ENCODE measurements at regions of chr14 and their contacts with region 1.

Region 1: DNA sequence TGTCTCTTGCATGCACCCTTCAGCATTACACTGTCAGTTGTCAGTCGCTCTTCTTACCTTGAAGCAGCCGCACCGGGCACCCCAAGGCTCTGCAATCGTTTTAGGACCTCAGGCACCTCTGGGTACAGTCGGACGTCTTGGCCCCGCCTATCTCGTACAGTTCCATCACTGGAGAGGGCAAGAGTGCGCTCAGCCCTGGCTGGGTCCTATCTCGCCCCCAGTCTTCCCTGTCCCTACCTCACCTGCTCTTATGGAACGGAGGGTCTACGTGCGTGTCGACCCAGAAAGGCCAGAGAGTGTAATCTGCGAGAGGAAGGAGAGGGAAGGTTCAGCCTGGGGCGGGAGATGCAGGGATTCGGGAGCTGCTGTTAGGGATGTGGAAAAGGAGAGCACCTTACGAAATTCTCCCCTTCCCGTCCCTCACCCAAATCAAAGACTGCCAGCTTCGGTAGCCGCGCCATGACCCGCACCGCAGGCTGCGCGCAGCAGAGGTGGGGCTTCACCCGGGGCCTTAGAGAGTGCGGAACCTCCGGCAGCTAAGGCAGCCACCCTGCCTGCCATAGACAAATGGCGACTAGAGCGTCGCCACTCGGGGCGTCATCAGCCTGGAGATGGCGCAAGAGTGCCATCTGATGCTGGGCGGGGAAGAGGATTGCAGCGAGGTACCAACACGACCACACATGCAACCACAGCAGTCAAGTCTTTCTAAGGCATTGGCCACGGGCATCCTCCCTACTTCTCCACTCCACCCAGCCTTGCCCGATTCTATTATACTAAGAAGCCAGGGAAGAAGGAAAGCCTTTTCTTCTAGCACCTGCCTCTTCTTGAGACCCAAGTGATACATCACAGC is at the start of gene MDP1:
- DNase-seq: peak; percentile 92
- H3K4me3 Mint-ChIP-seq: peak within 1 kb of the TSS; percentile 84
- H3K27ac Mint-ChIP-seq: peak within 1 kb of the TSS; percentile 94
- H3K4me1 Mint-ChIP-seq: peaks cover 41% of the 10 kb centered on the region
- H3K27me3 Mint-ChIP-seq: no peaks in the 10 kb centered on the region
- total RNA-seq, gene MDP1: 14.2 to 15.8 TPM

Region 2: GRCh38 chr14:24135834-24136542 is 79.7 kb before region 1 on chr14 and contains the start of gene PSME1:
- CTCF ChIA-PET with region 1: interaction called, 6 read pairs
- POLR2A ChIA-PET with region 1: interaction called, 6 read pairs
- intact Hi-C with region 1: loop called (anchors 1 kb)
- DNase-seq: peak; percentile 97
- H3K4me3 Mint-ChIP-seq: peak within 1 kb of the TSS; percentile 95
- H3K27ac Mint-ChIP-seq: peak within 1 kb of the TSS; percentile 96
- H3K4me1 Mint-ChIP-seq: peaks cover 54% of the 10 kb centered on the region
- H3K27me3 Mint-ChIP-seq: no peaks in the 10 kb centered on the region
- total RNA-seq, gene PSME1: 403 to 427 TPM

Region 3: GRCh38 chr14:24146978-24147760 is 68.6 kb before region 1 on chr14 and contains the start of gene RNF31:
- CTCF ChIA-PET with region 1: no interaction called
- POLR2A ChIA-PET with region 1: interaction called, 3 read pairs
- intact Hi-C with region 1: loop called (anchors 1 kb)
- DNase-seq: peak; percentile 99
- H3K4me3 Mint-ChIP-seq: peak within 1 kb of the TSS; percentile 100
- H3K27ac Mint-ChIP-seq: peak within 1 kb of the TSS; percentile 99
- H3K4me1 Mint-ChIP-seq: peaks cover 56% of the 10 kb centered on the region
- H3K27me3 Mint-ChIP-seq: no peaks in the 10 kb centered on the region
- total RNA-seq, gene RNF31: 75.5 to 80.4 TPM

Region 4: DNA sequence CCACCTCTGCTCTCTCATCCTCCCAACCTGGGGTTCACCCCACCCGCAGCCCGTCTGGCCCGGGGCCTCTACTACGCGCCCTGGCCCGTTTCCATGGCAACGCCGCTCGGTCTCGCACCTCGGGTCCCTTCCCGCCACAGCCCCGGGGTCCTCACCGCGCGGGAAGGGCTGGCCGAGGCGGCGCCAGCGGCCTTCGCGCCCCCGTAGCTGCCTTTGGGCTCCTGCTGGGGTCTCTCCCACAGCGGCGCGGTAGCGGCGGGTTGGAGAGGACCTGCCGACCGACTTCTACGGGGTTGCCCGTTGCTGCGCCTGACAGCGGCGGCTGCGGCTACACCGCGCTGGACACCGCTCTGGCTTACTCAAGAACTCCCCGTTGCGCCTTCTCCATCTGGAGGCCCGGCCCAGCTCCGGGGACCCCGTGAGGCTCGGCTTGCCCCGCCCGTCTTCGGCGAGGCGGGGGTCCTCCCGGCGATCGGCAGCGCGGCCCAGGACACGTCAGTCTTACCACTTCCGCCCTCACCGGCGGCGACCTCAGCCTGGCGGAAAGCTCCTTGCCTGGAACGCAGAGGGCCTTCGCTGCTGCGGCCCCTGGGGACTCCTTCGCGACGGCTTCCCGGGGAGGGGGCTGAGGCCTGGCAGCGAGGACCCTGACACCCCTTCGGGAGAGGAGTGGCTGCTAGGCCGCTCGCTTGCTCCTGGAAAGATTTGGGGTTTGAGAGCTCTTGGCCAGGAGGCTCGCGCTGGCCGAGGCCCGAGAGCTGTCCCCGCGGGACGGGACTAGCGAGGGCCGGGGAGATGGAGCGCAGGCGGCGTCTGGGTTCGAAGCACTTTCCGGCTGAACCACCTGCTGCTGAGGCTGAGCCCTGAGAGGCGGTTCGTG is 20.3 kb before region 1 on chr14 and contains the start of gene TM9SF1:
- CTCF ChIA-PET with region 1: interaction called, 9 read pairs
- POLR2A ChIA-PET with region 1: interaction called, 20 read pairs
- intact Hi-C with region 1: loop called (anchors 1 kb)
- DNase-seq: peak; percentile 91
- H3K4me3 Mint-ChIP-seq: peak within 1 kb of the TSS; percentile 96
- H3K27ac Mint-ChIP-seq: peak within 1 kb of the TSS; percentile 95
- H3K4me1 Mint-ChIP-seq: peaks cover 55% of the 10 kb centered on the region
- H3K27me3 Mint-ChIP-seq: no peaks in the 10 kb centered on the region
- total RNA-seq, gene TM9SF1: 23.7 to 26.7 TPM

Region 5: DNA sequence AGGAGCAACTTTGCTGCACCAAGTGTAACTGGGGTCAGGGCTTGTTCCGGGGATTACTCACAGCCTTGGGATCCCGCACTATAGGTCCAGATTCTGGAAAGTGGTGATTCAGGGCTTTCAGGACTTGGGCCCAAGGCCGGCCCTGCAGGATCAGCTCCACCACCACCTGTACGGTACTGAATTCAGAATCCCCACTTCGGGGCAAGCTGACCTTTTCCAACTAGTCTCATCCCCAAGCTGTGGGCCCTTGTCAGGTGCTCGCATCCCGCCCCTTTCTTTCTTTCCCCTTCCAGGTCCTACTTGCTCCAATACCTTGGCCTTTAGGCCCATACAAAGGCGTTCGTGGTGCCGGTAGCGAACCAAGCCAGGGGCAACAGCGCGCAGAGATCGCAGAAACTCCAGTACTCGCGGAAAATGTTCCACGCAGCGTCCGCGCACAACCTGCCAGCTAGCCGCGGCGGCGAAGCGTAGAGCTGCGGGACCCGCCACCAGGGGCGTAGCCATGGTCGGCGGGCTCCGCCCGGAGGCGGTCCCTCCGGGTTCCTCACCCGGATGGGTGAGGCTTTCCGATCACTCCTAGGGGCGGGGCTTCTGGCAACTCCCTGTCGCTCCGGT is 26.2 kb after region 1 on chr14:
- CTCF ChIA-PET with region 1: interaction called, 39 read pairs
- POLR2A ChIA-PET with region 1: interaction called, 12 read pairs
- intact Hi-C with region 1: loop called (anchors 1 kb)
- DNase-seq: peak; percentile 94
- H3K4me3 Mint-ChIP-seq: peak overlapping the region; percentile 84
- H3K27ac Mint-ChIP-seq: peak overlapping the region; percentile 96
- H3K4me1 Mint-ChIP-seq: peaks cover 59% of the 10 kb centered on the region
- H3K27me3 Mint-ChIP-seq: no peaks in the 10 kb centered on the region

Region 6: DNA sequence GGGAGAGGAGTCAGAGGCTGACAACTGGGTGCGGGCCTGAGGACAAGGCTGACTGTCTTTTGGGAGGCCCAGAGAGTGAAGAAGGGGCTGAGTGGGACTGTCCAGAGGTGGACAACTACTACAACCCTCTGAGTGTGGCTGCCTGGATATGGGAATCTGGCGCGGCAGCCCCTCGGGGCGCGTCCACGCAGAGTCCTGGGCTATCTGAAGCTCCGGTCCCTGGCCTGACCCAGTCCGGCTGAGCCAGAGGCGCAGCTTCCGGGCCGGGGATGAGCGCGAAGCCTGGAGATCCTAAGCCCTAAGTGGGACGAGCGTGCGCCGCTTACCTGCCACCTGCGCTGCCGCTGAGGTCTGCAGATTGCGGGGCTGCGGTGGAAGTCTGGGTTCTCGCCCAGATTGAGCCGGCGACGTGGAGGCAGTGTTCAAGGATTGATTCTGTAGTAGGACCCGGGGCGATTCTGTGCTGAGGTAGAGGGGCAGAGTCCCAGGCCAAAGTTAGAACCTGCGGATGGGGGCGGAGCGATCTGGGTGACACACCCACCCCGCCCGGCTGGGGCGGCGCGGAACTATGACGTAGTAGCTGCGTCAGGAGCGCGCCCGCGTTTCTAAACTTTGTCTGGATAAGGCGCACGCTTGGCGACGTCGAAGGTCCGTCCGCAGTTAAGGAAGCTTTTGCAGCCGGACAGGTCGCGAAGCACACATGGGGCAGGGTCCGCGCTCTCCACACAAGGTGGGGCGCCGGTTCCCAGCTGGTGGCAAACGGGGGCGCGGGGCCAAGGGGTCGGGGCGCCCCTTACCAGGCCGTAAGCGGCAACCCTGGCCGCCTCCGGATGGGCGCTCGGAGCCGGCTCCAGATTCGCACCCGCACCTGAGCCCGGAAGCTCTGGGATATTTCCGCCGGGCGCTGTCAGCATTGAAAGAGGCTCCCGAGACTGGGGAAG is 83.8 kb after region 1 on chr14 and contains the starts of genes DHRS1 and NOP9:
- CTCF ChIA-PET with region 1: interaction called, 28 read pairs
- POLR2A ChIA-PET with region 1: interaction called, 6 read pairs
- intact Hi-C with region 1: loop called (anchors 1 kb)
- DNase-seq: peak; percentile 96
- H3K4me3 Mint-ChIP-seq: peak within 1 kb of the TSS; percentile 90
- H3K27ac Mint-ChIP-seq: peak within 1 kb of the TSS; percentile 84
- H3K4me1 Mint-ChIP-seq: peaks cover 50% of the 10 kb centered on the region
- H3K27me3 Mint-ChIP-seq: no peaks in the 10 kb centered on the region
- total RNA-seq, gene DHRS1: 14.7 to 14.9 TPM
- total RNA-seq, gene NOP9: 30.7 to 30.9 TPM

Region 7: GRCh38 chr14:24332268-24332993 is 116.7 kb after region 1 on chr14:
- CTCF ChIA-PET with region 1: interaction called, 10 read pairs
- POLR2A ChIA-PET with region 1: no interaction called
- intact Hi-C with region 1: no loop called
- DNase-seq: peak; percentile 89
- H3K4me3 Mint-ChIP-seq: peak overlapping the region; percentile 78
- H3K27ac Mint-ChIP-seq: peak overlapping the region; percentile 30
- H3K4me1 Mint-ChIP-seq: peaks cover 46% of the 10 kb centered on the region
- H3K27me3 Mint-ChIP-seq: peaks cover 21% of the 10 kb centered on the region